Colonic mucosa (tissue), 4 donors: ENCODE measurements at regions of chr12 and their contacts with region 1.

Region 1: DNA sequence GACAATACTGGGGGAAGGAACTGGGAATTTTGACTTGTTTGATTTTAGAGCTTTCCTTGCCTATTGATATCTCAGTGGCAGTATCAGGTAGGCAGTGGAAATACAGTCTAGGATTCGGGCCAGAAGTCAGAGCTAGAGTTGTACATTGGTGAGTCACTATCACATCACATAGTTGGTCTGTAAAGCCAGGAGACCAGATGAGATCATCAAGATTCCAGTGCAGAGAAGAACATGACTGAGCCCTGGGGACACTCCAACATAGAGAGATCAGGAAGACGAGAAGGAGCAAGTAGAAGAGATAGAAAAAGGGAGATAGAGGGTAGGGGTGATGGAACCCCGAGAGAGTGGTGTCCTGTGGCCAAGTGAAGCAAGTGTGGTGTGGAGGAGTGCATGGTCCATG is 46.6 kb upstream of the NR1H4 start:
- DNase-seq: no peak
- H3K4me3 ChIP-seq: no peak overlapping the region
- H3K27ac ChIP-seq: no peak overlapping the region
- H3K4me1 ChIP-seq: no peaks in the 10 kb centered on the region
- H3K27me3 ChIP-seq: no peaks in the 10 kb centered on the region
- CTCF ChIP-seq: no peak

Region 2: DNA sequence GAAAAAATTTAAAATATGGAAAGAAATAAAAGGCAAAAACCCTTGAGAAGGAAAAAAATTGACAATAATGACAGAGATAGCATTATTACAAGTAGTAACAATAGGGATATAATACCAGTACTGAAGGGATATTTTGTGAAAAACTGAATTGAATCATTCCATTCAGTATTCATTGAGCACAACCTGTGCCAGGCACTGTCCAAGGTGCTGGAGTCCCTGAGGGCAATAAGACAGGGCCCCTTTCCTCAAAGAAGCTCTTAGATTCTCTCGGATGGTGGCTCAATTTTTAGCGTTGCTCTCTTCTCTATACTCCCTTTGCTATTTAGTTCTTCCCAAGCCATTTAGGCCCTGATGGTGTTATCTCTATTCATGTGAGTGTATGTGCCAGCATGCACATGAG is 112.1 kb after region 1 on chr12:
- intact Hi-C with region 1: loop called (anchors 10 kb)
- DNase-seq: peak; percentile 29
- H3K4me3 ChIP-seq: no peak overlapping the region
- H3K27ac ChIP-seq: no peak overlapping the region
- H3K4me1 ChIP-seq: no peaks in the 10 kb centered on the region
- H3K27me3 ChIP-seq: no peaks in the 10 kb centered on the region
- CTCF ChIP-seq: no peak